ENCODE measurements at regions of chr5 and their contacts with region 1.

Region 1: GRCh38 chr5:71475788-71476384 is 20.4 kb downstream of the BDP1 start:
- DNase-seq: peak; percentile 39
- H3K4me3 Mint-ChIP-seq: no peak overlapping the region
- H3K27ac Mint-ChIP-seq: no peak overlapping the region
- H3K4me1 Mint-ChIP-seq: no peaks in the 10 kb centered on the region
- H3K27me3 Mint-ChIP-seq: no peaks in the 10 kb centered on the region
- CTCF ChIP-seq: peak; percentile 59

Region 2: GRCh38 chr5:71384706-71385105 is 91.2 kb before region 1 on chr5:
- CTCF ChIA-PET with region 1: no interaction called
- POLR2A ChIA-PET with region 1: no interaction called
- intact Hi-C with region 1: no loop called
- DNase-seq: no peak
- H3K4me3 Mint-ChIP-seq: no peak overlapping the region
- H3K27ac Mint-ChIP-seq: no peak overlapping the region
- H3K4me1 Mint-ChIP-seq: no peaks in the 10 kb centered on the region
- H3K27me3 Mint-ChIP-seq: peaks cover 80% of the 10 kb centered on the region
- CTCF ChIP-seq: no peak

Region 3: GRCh38 chr5:71461360-71461759 is 14.5 kb before region 1 on chr5:
- CTCF ChIA-PET with region 1: interaction called, 16 read pairs
- POLR2A ChIA-PET with region 1: interaction called, 6 read pairs
- intact Hi-C with region 1: no loop called
- DNase-seq: no peak
- H3K4me3 Mint-ChIP-seq: no peak overlapping the region
- H3K27ac Mint-ChIP-seq: no peak overlapping the region
- H3K4me1 Mint-ChIP-seq: peaks cover 11% of the 10 kb centered on the region
- H3K27me3 Mint-ChIP-seq: no peaks in the 10 kb centered on the region
- CTCF ChIP-seq: no peak

Region 4: DNA sequence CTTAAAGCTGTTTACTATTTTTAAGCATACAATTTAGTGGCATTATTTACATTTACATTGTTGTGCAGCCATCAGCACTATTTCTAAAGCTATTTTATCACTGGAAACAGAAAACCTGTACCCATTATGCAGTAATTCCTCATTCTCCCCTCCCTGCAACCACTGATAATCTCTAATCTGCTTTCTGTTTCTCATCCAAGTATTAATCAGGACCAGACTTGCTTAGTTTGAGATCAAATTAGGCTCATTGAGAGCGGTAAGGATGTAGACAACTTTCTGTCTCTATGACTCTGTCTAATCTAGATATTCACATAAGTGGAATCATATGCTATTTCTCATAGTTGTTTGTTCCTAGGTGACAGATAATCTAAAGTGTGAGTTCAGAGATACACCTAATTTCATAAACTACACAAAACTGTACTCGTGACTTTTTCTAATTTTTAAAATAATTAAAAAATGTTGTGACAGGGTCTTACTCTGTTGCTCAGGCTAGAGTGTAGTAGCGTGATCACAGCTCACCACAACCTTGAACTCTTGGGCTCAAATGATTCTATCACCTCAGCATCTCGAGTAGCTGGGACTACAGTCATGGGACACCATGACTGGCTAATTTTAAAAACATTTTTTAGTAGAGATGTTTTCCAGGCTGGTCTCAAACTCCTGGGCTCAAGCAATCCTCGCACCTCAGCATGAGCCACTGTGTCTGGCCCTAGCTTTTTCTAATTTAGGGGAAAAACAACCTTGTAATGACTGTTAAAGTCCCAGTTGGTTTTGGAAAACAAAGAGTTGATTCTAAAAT is 17.1 kb after region 1 on chr5:
- CTCF ChIA-PET with region 1: interaction called, 21 read pairs
- POLR2A ChIA-PET with region 1: interaction called, 3 read pairs
- intact Hi-C with region 1: no loop called
- DNase-seq: no peak
- H3K4me3 Mint-ChIP-seq: no peak overlapping the region
- H3K27ac Mint-ChIP-seq: no peak overlapping the region
- H3K4me1 Mint-ChIP-seq: peaks cover 10% of the 10 kb centered on the region
- H3K27me3 Mint-ChIP-seq: no peaks in the 10 kb centered on the region
- CTCF ChIP-seq: no peak

Measured in MCF 10A (cell line).